ENCODE measurements at regions of chr12 and their contacts with region 1.

Region 1: GRCh38 chr12:76348079-76348901 is at the start of gene BBS10:
- DNase-seq: peak; percentile 81
- H3K4me3 Mint-ChIP-seq: peak within 1 kb of the TSS; percentile 95
- H3K27ac Mint-ChIP-seq: peak within 1 kb of the TSS; percentile 88
- H3K4me1 Mint-ChIP-seq: peaks cover 29% of the 10 kb centered on the region
- H3K27me3 Mint-ChIP-seq: peaks cover 1% of the 10 kb centered on the region
- total RNA-seq, gene BBS10: 3.7 and 4.1 TPM in 2 replicates

Region 2: DNA sequence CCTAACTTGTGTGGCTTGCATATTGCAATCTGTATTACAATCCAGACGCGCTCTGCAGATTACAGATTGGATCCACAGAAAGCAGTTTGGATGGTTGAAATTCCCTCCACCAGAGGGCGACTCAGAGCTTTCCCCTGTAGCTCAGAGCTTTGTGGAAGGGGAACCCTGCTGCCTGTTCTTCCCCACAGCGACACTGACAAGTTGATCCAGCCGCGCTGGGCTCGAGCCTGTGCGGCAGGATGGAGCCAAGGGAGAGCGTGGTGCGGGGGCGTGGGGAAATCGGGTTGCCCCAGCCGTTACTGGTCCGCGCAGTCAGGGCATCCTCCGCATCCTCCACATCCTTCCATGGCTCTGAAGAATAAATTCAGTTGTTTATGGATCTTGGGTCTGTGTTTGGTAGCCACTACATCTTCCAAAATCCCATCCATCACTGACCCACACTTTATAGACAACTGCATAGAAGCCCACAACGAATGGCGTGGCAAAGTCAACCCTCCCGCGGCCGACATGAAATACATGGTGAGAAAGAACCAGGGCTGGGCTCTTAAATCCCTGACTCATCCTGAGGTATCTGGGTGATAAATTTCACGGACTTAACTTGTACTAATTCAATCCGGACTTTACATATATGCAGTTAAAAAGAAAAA is 1013.8 kb before region 1 on chr12 and contains the start of gene GLIPR1L1:
- intact Hi-C with region 1: loop called (anchors 5 kb)
- DNase-seq: peak; percentile 67
- H3K4me3 Mint-ChIP-seq: peak within 1 kb of the TSS; percentile 70
- H3K27ac Mint-ChIP-seq: no peak within 1 kb of the TSS
- H3K4me1 Mint-ChIP-seq: peaks cover 36% of the 10 kb centered on the region
- H3K27me3 Mint-ChIP-seq: peaks cover 35% of the 10 kb centered on the region
- total RNA-seq, gene GLIPR1L1: not detected in 2 replicates

Region 3: GRCh38 chr12:75526655-75527511 is 821.4 kb before region 1 on chr12:
- intact Hi-C with region 1: loop called (anchors 5 kb)
- DNase-seq: peak; percentile 9
- H3K4me3 Mint-ChIP-seq: no peak overlapping the region
- H3K27ac Mint-ChIP-seq: no peak overlapping the region
- H3K4me1 Mint-ChIP-seq: peaks cover 15% of the 10 kb centered on the region
- H3K27me3 Mint-ChIP-seq: peaks cover 35% of the 10 kb centered on the region

Region 4: GRCh38 chr12:75977952-75978671 is 370.2 kb before region 1 on chr12:
- intact Hi-C with region 1: loop called (anchors 10 kb)
- DNase-seq: peak; percentile 81
- H3K4me3 Mint-ChIP-seq: peak overlapping the region; percentile 38
- H3K27ac Mint-ChIP-seq: peak overlapping the region; percentile 94
- H3K4me1 Mint-ChIP-seq: peaks cover 77% of the 10 kb centered on the region
- H3K27me3 Mint-ChIP-seq: no peaks in the 10 kb centered on the region

Region 5: GRCh38 chr12:76158518-76159321 is 189.6 kb before region 1 on chr12:
- intact Hi-C with region 1: loop called (anchors 1 kb)
- DNase-seq: peak; percentile 67
- H3K4me3 Mint-ChIP-seq: peak overlapping the region; percentile 47
- H3K27ac Mint-ChIP-seq: peak overlapping the region; percentile 84
- H3K4me1 Mint-ChIP-seq: peaks cover 18% of the 10 kb centered on the region
- H3K27me3 Mint-ChIP-seq: peaks cover 27% of the 10 kb centered on the region

Region 6: GRCh38 chr12:76366163-76366562 is 17.9 kb after region 1 on chr12:
- intact Hi-C with region 1: loop called (anchors 1 kb)
- DNase-seq: no peak
- H3K4me3 Mint-ChIP-seq: no peak overlapping the region
- H3K27ac Mint-ChIP-seq: no peak overlapping the region
- H3K4me1 Mint-ChIP-seq: no peaks in the 10 kb centered on the region
- H3K27me3 Mint-ChIP-seq: no peaks in the 10 kb centered on the region

Region 7: DNA sequence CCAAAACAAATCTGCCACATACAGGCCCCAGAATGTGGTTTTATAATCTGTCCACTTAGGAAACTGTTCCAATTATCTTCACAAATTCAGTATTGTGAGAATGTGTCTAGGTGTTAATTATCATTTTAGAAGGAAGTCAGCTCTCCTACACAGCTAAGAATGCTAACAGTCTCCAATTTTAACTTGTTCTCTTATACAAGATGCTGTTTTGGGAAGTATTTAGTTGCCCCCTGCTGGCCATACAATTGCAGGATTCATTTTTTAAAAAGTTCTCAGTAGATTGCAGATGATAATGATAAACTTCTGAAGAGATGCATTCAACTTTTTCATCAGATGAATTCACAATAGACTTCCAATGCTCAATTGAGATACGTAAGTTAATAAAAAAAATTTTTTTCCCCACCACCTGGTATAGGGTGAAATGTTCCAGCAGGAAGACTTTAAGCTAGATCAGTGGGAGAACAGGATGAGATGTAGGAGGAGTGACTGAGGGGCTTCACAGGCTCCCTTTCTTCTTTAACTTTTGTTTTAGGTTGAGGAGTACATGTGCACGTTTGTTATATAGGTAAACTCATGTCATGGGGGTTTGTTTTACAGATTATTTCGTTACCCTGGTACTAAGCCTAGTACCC is 238.6 kb after region 1 on chr12:
- intact Hi-C with region 1: loop called (anchors 2 kb)
- DNase-seq: peak; percentile 7
- H3K4me3 Mint-ChIP-seq: no peak overlapping the region
- H3K27ac Mint-ChIP-seq: no peak overlapping the region
- H3K4me1 Mint-ChIP-seq: peaks cover 21% of the 10 kb centered on the region
- H3K27me3 Mint-ChIP-seq: peaks cover 2% of the 10 kb centered on the region